Right ventricle myocardium inferior (tissue), 1 donor: ENCODE measurements at regions of chr4 and their contacts with region 1.

Region 1: DNA sequence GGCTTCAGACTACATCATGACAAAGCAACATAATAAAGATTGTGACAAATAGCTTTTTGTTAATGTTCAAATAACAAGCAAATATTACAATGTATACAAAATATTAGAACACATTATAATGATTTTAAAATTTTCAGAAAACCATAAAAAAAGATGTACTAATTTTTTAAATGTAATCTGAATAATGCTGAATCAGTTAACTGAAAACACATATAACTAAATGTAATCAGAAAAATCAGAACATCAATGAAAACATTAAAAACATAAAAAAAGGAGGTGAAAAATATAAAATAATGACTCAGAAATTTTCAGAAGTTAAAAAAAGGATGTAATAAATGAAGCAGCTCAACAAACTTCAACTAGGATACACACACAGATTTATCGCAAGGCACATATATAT is 53.5 kb downstream of the ZNF721 start:
- DNase-seq: no peak
- ATAC-seq: no peak

Region 2: GRCh38 chr4:373062-373839 is 72.2 kb before region 1 on chr4:
- intact Hi-C with region 1: loop called (anchors 5 kb)
- DNase-seq: no peak
- ATAC-seq: no peak